Naive thymus-derived CD4-positive, alpha-beta T cell (primary cell): ENCODE measurements at regions of chr20 and their contacts with region 1.

Region 1: DNA sequence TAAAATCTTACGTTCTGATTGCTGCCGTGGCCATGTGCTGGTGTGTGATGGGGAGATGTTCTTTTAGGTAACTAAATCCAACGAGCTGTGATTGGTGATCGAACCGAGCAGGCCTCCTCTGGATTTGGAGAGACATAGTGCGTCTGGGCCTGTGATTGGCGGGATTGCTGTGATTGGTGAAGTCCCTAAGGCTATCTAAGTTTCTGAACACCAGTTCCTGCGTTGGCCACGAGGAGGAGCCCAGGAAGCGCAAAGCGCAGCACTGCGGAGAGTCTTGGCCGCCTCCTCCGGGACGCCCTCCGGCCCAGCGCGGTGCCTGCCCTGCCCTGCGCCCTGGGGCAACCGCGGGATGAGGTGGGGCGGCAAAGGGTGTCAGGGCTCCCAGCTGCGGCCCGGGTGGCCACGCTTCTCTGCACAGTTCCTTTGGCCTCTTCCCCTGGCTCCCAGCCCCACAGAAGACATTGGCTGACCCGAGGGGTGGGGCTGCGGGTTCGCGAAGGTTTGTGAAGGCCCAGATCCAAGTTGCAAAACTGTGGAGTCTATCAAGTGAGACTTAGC is 33.0 kb downstream of the HNF4A start:
- DNase-seq: peak; percentile 30 to 70 (median 50)
- ATAC-seq: peak; percentile 91
- H3K4me3 ChIP-seq: no peak overlapping the region
- H3K4me3 Mint-ChIP-seq: peak overlapping the region in 4 of 10 donors; percentile 14 to 69 (median 38)
- H3K27ac ChIP-seq: no peak overlapping the region
- H3K27ac Mint-ChIP-seq: peak overlapping the region in 1 of 9 donors; percentile 41
- H3K4me1 ChIP-seq: no peaks in the 10 kb centered on the region
- H3K4me1 Mint-ChIP-seq: peaks cover 4 to 16% (median 8%) of the 10 kb centered on the region in 7 donors
- H3K27me3 ChIP-seq: no peaks in the 10 kb centered on the region
- H3K27me3 Mint-ChIP-seq: peaks cover 9 to 20% (median 10%) of the 10 kb centered on the region in 5 donors

Region 2: GRCh38 chr20:44115762-44116644 is 272.5 kb before region 1 on chr20:
- CTCF ChIA-PET with region 1: interaction called, 3 read pairs
- POLR2A ChIA-PET with region 1: no interaction called
- intact Hi-C with region 1: loop called (anchors 1 to 2 kb)
- DNase-seq: no peak
- ATAC-seq: no peak
- H3K4me3 ChIP-seq: no peak overlapping the region
- H3K4me3 Mint-ChIP-seq: peak overlapping the region in 1 of 10 donors; percentile 23
- H3K27ac ChIP-seq: no peak overlapping the region
- H3K27ac Mint-ChIP-seq: peak overlapping the region in 1 of 9 donors; percentile 49
- H3K4me1 ChIP-seq: no peaks in the 10 kb centered on the region
- H3K4me1 Mint-ChIP-seq: peaks cover 0 to 16% (median 5%) of the 10 kb centered on the region in 7 donors
- H3K27me3 ChIP-seq: no peaks in the 10 kb centered on the region
- H3K27me3 Mint-ChIP-seq: peaks cover 8 to 34% (median 20%) of the 10 kb centered on the region in 5 donors

Region 3: GRCh38 chr20:44460795-44461141 is 72.2 kb after region 1 on chr20:
- CTCF ChIA-PET with region 1: no interaction called
- POLR2A ChIA-PET with region 1: no interaction called
- intact Hi-C with region 1: loop called (anchors 2 kb)
- DNase-seq: peak in 5 of 9 donors; percentile 16 to 31 (median 24)
- ATAC-seq: peak; percentile 34
- H3K4me3 ChIP-seq: no peak overlapping the region
- H3K4me3 Mint-ChIP-seq: no peak overlapping the region
- H3K27ac ChIP-seq: no peak overlapping the region
- H3K27ac Mint-ChIP-seq: peak overlapping the region in 1 of 9 donors; percentile 43
- H3K4me1 ChIP-seq: no peaks in the 10 kb centered on the region
- H3K4me1 Mint-ChIP-seq: no peaks in the 10 kb centered on the region
- H3K27me3 ChIP-seq: no peaks in the 10 kb centered on the region
- H3K27me3 Mint-ChIP-seq: peaks cover 0 to 5% (median 0%) of the 10 kb centered on the region in 5 donors

Region 4: DNA sequence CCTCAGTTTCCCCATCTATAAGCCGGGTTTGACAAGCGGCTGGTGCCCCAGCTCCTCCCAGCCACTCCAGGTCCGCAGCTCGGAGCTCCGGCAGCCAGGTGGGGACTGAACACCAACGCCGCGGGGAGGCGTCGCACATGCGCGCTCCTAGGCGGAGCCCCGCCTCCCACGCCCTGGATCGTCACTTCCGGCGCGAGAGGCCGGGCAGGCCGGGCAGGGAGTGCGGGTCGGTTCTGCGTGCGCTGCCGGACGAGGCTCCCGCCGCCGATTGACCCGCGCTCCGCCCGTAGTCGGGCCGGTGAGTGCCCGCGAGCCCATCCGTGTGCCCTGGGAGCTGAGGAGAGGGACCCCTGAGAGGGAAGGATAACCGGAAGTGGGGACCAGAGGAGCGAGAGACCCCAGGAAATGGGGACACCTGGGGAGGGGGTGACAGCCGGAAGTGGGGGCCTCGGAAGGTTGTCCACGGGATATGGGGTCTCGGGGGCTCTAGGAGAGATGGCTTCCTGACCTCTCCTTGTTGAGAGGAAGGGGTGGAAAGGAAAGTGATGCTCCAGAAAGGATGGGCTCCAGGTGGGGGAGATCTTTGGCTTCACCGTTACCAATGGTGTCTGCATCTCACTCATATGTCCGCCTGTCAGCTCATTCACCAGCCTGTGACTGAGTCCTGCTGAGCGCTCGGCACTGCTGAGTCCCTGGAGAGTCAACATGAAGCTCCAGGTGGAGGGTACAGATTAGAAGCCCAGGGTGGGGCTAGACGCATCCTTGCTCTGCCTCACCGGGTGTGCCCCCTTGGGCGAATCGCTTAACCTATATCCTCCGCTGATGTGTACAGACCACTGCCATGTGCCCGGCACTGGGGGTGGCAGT is 87.4 kb after region 1 on chr20 and contains the start of gene TTPAL:
- CTCF ChIA-PET with region 1: no interaction called
- POLR2A ChIA-PET with region 1: interaction called, 3 read pairs
- intact Hi-C with region 1: loop called in 1 of 2 experiments (anchors 5 kb)
- DNase-seq: peak; percentile 83 to 95 (median 89)
- ATAC-seq: peak; percentile 98
- H3K4me3 ChIP-seq: peak within 1 kb of the TSS; percentile 65
- H3K4me3 Mint-ChIP-seq: peak within 1 kb of the TSS; percentile 87 to 96 (median 91)
- H3K27ac ChIP-seq: peak within 1 kb of the TSS; percentile 97
- H3K27ac Mint-ChIP-seq: peak within 1 kb of the TSS; percentile 86 to 97 (median 94)
- H3K4me1 ChIP-seq: peaks cover 12 to 17% of the 10 kb centered on the region in 2 donors
- H3K4me1 Mint-ChIP-seq: peaks cover 14 to 43% (median 31%) of the 10 kb centered on the region in 7 donors
- H3K27me3 ChIP-seq: no peaks in the 10 kb centered on the region
- H3K27me3 Mint-ChIP-seq: no peaks in the 10 kb centered on the region
- total RNA-seq, gene TTPAL: 12.0 to 20.7 (median 17.0) TPM

Region 5: DNA sequence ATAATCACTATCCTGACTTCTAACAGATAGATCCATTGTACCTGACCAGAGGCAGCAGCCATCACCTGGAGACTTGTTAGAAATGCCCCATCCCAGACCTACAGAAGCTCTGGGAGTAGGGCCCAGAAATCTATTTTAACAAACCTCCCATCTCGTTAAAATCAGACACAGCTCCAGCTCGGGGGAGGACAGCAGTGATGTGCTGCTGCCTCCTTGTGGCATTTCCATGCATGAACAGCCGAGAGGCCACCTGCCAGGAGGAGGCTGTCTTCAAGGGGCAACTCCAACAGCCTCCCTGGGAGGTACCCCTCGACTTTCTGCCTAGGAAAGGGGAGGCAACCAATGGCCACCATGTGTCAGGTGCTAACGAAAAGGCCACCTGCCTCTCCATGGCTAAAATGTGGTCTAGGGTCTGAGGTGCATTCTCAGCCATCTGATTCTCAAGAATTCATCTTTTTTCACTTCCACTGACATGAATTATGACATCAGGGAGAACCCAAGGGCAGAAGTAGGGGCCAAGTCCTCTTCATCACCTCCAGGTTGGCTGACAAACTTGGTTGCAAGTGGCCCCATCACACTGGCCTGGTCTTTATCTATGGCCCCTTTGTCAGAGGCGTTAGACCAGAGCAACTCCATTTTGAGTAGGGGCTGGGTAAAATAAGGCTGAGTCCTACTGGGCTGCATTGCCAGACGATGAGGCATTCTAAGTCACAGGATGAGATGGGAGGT is 345.0 kb after region 1 on chr20:
- CTCF ChIA-PET with region 1: interaction called, 8 read pairs
- POLR2A ChIA-PET with region 1: no interaction called
- intact Hi-C with region 1: loop called (anchors 1 kb)
- DNase-seq: peak; percentile 34 to 73 (median 57)
- ATAC-seq: peak; percentile 77
- H3K4me3 ChIP-seq: no peak overlapping the region
- H3K4me3 Mint-ChIP-seq: no peak overlapping the region
- H3K27ac ChIP-seq: no peak overlapping the region
- H3K27ac Mint-ChIP-seq: peak overlapping the region in 1 of 9 donors; percentile 32
- H3K4me1 ChIP-seq: no peaks in the 10 kb centered on the region
- H3K4me1 Mint-ChIP-seq: peaks cover 11 to 23% (median 20%) of the 10 kb centered on the region in 7 donors
- H3K27me3 ChIP-seq: no peaks in the 10 kb centered on the region
- H3K27me3 Mint-ChIP-seq: no peaks in the 10 kb centered on the region

Region 6: DNA sequence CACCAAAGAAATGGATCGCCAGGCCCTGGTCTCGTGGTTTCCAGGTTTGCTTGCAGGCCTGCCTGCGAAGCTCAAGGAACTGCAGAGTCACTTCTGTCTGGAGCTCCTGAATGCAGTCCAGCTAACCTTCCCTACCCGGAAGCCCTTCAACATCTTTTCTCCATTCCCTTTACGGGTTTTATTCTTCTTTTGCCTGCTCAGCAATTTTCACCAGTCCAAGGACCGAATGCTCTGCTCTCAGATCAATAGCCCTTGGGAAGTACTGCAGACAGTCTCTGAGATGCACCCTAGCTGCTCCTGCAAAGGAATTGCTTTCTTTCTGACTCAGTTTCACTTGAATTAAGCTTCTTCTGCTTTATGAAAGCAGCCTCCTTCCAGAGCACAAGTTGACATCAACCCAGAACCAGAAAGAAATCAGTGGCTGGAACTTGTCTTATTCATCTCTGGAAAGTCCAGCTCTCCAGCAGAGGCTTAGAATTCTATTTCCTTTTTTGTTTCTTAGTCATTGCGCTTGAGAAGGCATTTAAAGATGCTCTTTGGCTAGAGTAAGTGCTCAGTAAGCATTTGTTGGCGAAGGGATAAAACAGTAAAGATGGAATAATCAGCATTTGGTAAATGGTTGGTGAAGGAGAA is 478.3 kb after region 1 on chr20:
- CTCF ChIA-PET with region 1: no interaction called
- POLR2A ChIA-PET with region 1: no interaction called
- intact Hi-C with region 1: loop called (anchors 1 to 5 kb)
- DNase-seq: no peak
- ATAC-seq: no peak
- H3K4me3 ChIP-seq: no peak overlapping the region
- H3K4me3 Mint-ChIP-seq: peak overlapping the region in 9 of 10 donors; percentile 41 to 81 (median 70)
- H3K27ac ChIP-seq: no peak overlapping the region
- H3K27ac Mint-ChIP-seq: peak overlapping the region in 2 of 9 donors; percentile 33 to 43
- H3K4me1 ChIP-seq: no peaks in the 10 kb centered on the region
- H3K4me1 Mint-ChIP-seq: peaks cover 0 to 15% (median 8%) of the 10 kb centered on the region in 7 donors
- H3K27me3 ChIP-seq: no peaks in the 10 kb centered on the region
- H3K27me3 Mint-ChIP-seq: peaks cover 0 to 28% (median 0%) of the 10 kb centered on the region in 5 donors